CD4-positive, alpha-beta memory T cell (primary cell): ENCODE measurements at regions of chr1 and their contacts with region 1.

Region 1: GRCh38 chr1:28736450-28737306 is at the start of gene YTHDF2:
- DNase-seq: peak; percentile 97
- H3K4me3 ChIP-seq: peak within 1 kb of the TSS; percentile 55 to 59
- H3K4me3 Mint-ChIP-seq: peak within 1 kb of the TSS; percentile 92 to 99 (median 96)
- H3K27ac ChIP-seq: peak within 1 kb of the TSS; percentile 90
- H3K27ac Mint-ChIP-seq: peak within 1 kb of the TSS; percentile 93 to 98 (median 97)
- H3K4me1 ChIP-seq: peaks cover 43% of the 10 kb centered on the region
- H3K4me1 Mint-ChIP-seq: peaks cover 18 to 51% (median 29%) of the 10 kb centered on the region in 4 donors
- H3K27me3 ChIP-seq: no peaks in the 10 kb centered on the region
- H3K27me3 Mint-ChIP-seq: peaks cover 0 to 2% of the 10 kb centered on the region in 2 donors
- total RNA-seq, gene YTHDF2: 65.1 to 76.8 TPM

Region 2: GRCh38 chr1:28329395-28330153 is 407.1 kb before region 1 on chr1:
- CTCF ChIA-PET with region 1: interaction called, 3 read pairs
- POLR2A ChIA-PET with region 1: interaction called, 22 read pairs
- intact Hi-C with region 1: no loop called
- DNase-seq: no peak
- H3K4me3 ChIP-seq: peak overlapping the region; percentile 51 to 53
- H3K4me3 Mint-ChIP-seq: peak overlapping the region; percentile 94 to 96 (median 95)
- H3K27ac ChIP-seq: peak overlapping the region; percentile 84
- H3K27ac Mint-ChIP-seq: peak overlapping the region; percentile 97 to 100 (median 99)
- H3K4me1 ChIP-seq: peaks cover 29% of the 10 kb centered on the region
- H3K4me1 Mint-ChIP-seq: peaks cover 19 to 39% (median 26%) of the 10 kb centered on the region in 4 donors
- H3K27me3 ChIP-seq: no peaks in the 10 kb centered on the region
- H3K27me3 Mint-ChIP-seq: peaks cover 0 to 2% of the 10 kb centered on the region in 2 donors

Region 3: DNA sequence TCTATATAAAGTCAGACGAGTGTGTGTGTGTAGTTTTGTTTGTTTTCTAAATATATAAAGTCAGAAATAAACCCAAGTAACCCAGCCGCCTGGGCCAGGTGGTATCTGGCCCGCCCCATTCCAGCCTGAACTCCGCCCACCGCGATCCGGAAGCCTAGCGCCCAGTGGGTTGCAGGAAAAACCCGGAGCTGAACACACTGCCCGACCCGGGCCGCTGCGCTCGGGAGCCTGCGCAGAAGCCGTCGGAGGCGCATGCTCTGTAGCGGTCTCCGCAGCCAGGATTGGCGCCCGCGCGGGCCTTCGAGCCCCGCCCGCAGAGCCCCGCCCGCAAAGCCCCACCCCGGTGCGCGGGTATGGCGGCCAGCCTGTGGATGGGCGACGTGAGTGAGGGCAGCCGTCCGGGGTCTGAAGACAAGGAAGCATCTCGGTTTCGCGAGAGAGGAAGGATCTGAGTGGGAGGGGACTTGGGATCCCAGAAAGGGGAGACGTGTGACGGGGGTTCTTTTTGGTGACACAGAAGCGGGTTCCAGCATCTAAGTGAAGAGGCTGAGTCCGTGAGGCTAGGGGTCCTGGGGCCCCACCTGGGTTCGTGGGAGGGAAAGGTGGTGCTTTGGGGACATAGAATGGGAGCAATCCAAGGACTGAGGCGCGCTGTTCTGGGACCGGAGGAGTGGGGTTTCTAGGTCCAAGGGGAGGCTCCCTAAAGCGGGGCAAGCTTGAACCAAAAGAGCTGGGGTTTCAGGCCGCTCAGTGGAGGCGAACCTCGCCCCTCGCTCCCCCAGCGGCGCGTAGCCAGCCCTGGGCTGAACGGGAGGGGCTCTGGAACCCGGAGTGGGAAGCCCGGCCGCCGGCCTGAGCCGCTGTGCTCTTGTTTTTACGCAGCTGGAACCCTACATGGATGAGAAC is 183.7 kb before region 1 on chr1 and contains the start of gene TRNAU1AP:
- CTCF ChIA-PET with region 1: interaction called, 4 read pairs
- POLR2A ChIA-PET with region 1: interaction called, 3 read pairs
- intact Hi-C with region 1: loop called (anchors 2 kb)
- DNase-seq: peak; percentile 96 to 98 (median 97)
- H3K4me3 ChIP-seq: peak within 1 kb of the TSS; percentile 89 to 96
- H3K4me3 Mint-ChIP-seq: peak within 1 kb of the TSS; percentile 98 to 100 (median 99)
- H3K27ac ChIP-seq: peak within 1 kb of the TSS; percentile 80
- H3K27ac Mint-ChIP-seq: peak within 1 kb of the TSS; percentile 96 to 99 (median 98)
- H3K4me1 ChIP-seq: peaks cover 21% of the 10 kb centered on the region
- H3K4me1 Mint-ChIP-seq: peaks cover 11 to 35% (median 19%) of the 10 kb centered on the region in 4 donors
- H3K27me3 ChIP-seq: no peaks in the 10 kb centered on the region
- H3K27me3 Mint-ChIP-seq: no peaks in the 10 kb centered on the region
- total RNA-seq, gene TRNAU1AP: 46.3 to 46.7 TPM

Region 4: GRCh38 chr1:28648474-28649198 is 88.0 kb before region 1 on chr1 and contains the start of gene RNU11:
- CTCF ChIA-PET with region 1: interaction called, 83 read pairs
- POLR2A ChIA-PET with region 1: interaction called, 182 read pairs
- intact Hi-C with region 1: loop called (anchors 1 kb)
- DNase-seq: peak; percentile 93 to 95 (median 95)
- H3K4me3 ChIP-seq: peak within 1 kb of the TSS; percentile 55 to 91
- H3K4me3 Mint-ChIP-seq: peak within 1 kb of the TSS; percentile 84 to 94 (median 90)
- H3K27ac ChIP-seq: peak within 1 kb of the TSS; percentile 96
- H3K27ac Mint-ChIP-seq: peak within 1 kb of the TSS; percentile 99 to 100 (median 99)
- H3K4me1 ChIP-seq: peaks cover 31% of the 10 kb centered on the region
- H3K4me1 Mint-ChIP-seq: peaks cover 15 to 36% (median 25%) of the 10 kb centered on the region in 4 donors
- H3K27me3 ChIP-seq: no peaks in the 10 kb centered on the region
- H3K27me3 Mint-ChIP-seq: no peaks in the 10 kb centered on the region
- total RNA-seq, gene RNU11: not detected

Region 5: DNA sequence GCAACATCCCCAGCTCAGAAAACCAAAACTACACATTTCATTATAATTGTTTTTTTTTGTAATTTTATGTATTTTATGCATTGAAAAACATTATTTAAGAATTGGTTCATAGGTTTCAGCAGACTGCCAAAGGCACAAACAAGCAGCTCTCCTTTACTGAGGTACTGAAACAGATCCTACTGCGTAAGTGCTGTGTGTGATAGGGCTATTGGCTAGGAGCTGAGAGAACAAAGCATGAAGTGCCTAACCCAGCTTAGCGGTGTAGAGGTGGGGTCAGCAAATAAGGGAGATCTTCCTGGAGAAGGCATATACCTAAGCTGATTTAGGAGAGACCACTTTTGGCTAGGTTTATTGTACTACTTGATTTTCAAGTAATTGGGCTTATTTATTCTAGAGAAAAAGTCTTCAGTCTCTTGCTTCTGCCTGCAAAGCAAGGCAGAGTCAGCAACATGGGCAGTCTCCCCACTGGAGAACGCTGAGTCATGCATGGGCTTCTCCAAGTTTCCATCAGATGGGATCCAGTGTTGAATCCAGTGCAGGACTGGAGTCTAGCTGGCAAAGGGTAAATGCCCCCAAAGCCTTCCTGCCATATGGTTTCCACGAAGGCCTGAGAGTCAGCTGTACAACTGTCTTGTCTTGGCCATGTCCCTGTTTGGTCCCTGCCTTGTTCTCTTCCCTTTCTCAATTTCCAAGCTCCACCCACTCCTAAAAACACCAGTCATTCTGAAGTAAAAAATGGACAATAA is 17.9 kb before region 1 on chr1:
- CTCF ChIA-PET with region 1: interaction called, 13 read pairs
- POLR2A ChIA-PET with region 1: interaction called, 4 read pairs
- intact Hi-C with region 1: no loop called
- DNase-seq: no peak
- H3K4me3 ChIP-seq: no peak overlapping the region
- H3K4me3 Mint-ChIP-seq: no peak overlapping the region
- H3K27ac ChIP-seq: no peak overlapping the region
- H3K27ac Mint-ChIP-seq: peak overlapping the region in 4 of 7 donors; percentile 0 to 44 (median 15)
- H3K4me1 ChIP-seq: no peaks in the 10 kb centered on the region
- H3K4me1 Mint-ChIP-seq: peaks cover 0 to 4% (median 1%) of the 10 kb centered on the region in 4 donors
- H3K27me3 ChIP-seq: no peaks in the 10 kb centered on the region
- H3K27me3 Mint-ChIP-seq: no peaks in the 10 kb centered on the region

Region 6: DNA sequence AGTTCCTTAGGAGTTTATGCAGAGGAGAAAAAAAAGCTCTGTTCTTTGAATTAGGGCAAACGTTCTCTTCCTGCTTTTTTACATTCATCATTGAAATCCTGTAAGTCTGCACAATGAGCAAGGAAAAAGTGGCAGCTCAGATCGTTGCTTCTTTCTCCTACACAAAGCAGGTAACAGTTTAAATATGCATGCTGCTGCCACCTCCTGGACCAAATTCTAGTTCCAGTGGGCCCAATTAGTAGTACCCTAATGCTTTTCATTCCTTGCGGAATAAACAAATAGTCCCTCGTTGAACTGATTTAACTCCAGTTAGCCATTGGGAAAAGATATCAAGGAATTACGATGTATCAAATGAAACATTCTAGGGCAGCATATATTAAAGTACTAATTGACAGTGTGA is 20.2 kb after region 1 on chr1:
- CTCF ChIA-PET with region 1: interaction called, 18 read pairs
- POLR2A ChIA-PET with region 1: interaction called, 15 read pairs
- intact Hi-C with region 1: no loop called
- DNase-seq: peak in 2 of 5 donors; percentile 6 to 16
- H3K4me3 ChIP-seq: no peak overlapping the region
- H3K4me3 Mint-ChIP-seq: peak overlapping the region in 1 of 8 donors; percentile 52
- H3K27ac ChIP-seq: no peak overlapping the region
- H3K27ac Mint-ChIP-seq: peak overlapping the region in 2 of 7 donors; percentile 57
- H3K4me1 ChIP-seq: peaks cover 63% of the 10 kb centered on the region
- H3K4me1 Mint-ChIP-seq: peaks cover 21 to 36% (median 30%) of the 10 kb centered on the region in 4 donors
- H3K27me3 ChIP-seq: no peaks in the 10 kb centered on the region
- H3K27me3 Mint-ChIP-seq: no peaks in the 10 kb centered on the region

Region 7: DNA sequence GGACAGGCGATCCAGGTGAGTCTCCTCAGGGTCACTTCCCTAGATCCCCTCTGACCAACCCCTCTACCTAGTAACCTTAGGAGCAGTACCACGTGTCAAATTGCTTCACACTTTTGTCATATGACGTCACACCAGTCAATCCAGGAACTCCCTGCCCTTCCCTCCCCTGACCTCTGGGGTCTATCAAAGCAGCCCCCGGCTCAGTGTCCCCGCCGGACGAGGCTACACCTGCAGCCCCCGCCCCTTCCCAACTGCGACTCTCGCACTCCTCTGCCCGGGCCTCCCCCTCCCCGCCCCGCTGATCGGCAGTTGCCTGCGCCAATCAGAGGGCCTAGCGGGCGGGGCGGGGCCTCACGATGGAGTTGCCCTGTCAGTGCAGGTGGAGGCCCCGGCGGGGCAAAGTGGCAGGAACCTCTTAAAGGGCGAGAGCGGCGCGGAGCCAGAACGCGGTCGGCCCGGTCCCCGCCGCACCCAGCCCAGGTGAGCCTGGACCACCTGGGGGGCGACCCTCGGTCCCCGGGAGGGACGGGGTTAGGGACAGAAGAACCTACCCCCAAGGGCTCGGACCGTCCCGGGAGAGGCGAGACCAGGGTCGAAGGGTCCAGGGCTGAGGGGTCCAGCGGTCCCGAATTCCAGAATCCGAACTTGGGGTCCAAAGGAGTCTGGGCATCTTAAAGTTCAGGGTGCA is 150.2 kb after region 1 on chr1:
- CTCF ChIA-PET with region 1: no interaction called
- POLR2A ChIA-PET with region 1: interaction called, 5 read pairs
- intact Hi-C with region 1: loop called (anchors 2 kb)
- DNase-seq: peak; percentile 90 to 94 (median 92)
- H3K4me3 ChIP-seq: peak overlapping the region; percentile 39 to 95
- H3K4me3 Mint-ChIP-seq: peak overlapping the region; percentile 84 to 96 (median 89)
- H3K27ac ChIP-seq: peak overlapping the region; percentile 88
- H3K27ac Mint-ChIP-seq: peak overlapping the region; percentile 93 to 100 (median 98)
- H3K4me1 ChIP-seq: peaks cover 64% of the 10 kb centered on the region
- H3K4me1 Mint-ChIP-seq: peaks cover 45 to 71% (median 61%) of the 10 kb centered on the region in 4 donors
- H3K27me3 ChIP-seq: no peaks in the 10 kb centered on the region
- H3K27me3 Mint-ChIP-seq: peaks cover 0 to 4% of the 10 kb centered on the region in 2 donors